ENCODE measurements at regions of chr18 and their contacts with region 1.

Region 1: DNA sequence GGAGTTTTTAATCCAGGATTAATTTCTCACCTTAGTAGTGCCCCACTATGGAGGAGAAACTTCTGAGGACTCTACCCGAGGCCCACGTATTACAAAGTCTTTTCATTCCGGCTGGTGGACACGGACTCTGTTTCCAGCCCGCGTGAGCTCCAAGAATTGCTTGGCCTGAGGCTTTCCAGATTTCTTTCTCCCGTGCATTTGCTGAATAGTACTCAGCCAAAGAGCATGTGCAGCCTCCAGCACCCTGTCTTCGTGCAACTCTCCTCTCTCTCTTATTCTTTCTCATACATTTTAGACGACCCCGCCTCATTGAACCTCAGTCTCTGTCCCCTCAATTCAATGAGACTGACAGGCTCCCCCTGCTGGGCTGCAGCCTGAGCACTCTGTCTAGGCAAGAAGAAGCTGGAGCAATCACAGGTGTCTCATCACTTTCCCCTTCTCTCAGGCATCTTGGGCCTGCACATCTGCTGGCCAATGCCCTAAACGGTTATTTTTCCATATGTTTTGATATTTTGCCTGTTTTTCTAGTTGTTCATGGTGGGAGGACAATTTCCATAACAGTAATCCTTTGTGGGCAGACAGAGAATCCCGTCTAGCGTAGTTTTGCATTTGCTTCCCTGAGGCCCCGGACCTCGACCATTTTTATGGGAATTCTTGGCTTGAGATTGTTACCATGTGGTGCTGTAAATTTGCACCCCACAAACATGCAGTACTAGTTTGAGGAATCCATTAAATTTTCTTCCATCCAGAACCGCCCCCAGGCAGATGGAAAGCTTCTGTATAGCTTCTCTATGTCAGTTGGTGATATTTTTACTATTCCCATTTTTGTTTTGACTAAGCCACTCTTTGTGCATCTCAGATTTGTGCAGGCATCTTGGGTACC is 50.1 kb upstream of the LPIN2 start:
- DNase-seq: peak; percentile 84
- H3K4me3 Mint-ChIP-seq: peak overlapping the region; percentile 73
- H3K27ac Mint-ChIP-seq: peak overlapping the region; percentile 94
- H3K4me1 Mint-ChIP-seq: peaks cover 70% of the 10 kb centered on the region
- H3K27me3 Mint-ChIP-seq: no peaks in the 10 kb centered on the region

Region 2: DNA sequence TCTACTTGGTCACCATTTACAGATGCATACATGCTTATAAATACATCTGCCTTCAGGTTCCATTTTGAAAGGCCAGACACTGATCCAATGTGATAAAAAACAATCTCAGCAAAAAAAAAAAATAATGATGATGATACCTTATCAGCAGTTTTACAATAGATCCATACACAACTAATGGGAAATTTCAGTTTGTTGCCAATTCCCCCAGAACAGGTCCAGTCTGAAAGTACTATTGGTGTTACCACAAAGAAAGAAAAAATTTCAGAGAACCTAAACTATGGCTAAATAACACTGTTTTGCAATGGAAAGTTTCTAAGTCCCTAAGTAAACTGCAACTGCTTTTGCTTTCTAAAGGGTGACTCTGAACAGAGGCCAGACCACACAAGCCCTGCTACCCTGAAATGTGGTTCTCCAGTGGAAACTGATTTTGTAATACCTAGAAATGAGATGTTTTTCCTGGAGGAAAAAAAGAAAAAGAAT is 104.2 kb before region 1 on chr18:
- CTCF ChIA-PET with region 1: interaction called, 16 read pairs
- POLR2A ChIA-PET with region 1: interaction called, 3 read pairs
- DNase-seq: peak; percentile 65
- H3K4me3 Mint-ChIP-seq: peak overlapping the region; percentile 69
- H3K27ac Mint-ChIP-seq: peak overlapping the region; percentile 97
- H3K4me1 Mint-ChIP-seq: peaks cover 91% of the 10 kb centered on the region
- H3K27me3 Mint-ChIP-seq: no peaks in the 10 kb centered on the region

Region 3: DNA sequence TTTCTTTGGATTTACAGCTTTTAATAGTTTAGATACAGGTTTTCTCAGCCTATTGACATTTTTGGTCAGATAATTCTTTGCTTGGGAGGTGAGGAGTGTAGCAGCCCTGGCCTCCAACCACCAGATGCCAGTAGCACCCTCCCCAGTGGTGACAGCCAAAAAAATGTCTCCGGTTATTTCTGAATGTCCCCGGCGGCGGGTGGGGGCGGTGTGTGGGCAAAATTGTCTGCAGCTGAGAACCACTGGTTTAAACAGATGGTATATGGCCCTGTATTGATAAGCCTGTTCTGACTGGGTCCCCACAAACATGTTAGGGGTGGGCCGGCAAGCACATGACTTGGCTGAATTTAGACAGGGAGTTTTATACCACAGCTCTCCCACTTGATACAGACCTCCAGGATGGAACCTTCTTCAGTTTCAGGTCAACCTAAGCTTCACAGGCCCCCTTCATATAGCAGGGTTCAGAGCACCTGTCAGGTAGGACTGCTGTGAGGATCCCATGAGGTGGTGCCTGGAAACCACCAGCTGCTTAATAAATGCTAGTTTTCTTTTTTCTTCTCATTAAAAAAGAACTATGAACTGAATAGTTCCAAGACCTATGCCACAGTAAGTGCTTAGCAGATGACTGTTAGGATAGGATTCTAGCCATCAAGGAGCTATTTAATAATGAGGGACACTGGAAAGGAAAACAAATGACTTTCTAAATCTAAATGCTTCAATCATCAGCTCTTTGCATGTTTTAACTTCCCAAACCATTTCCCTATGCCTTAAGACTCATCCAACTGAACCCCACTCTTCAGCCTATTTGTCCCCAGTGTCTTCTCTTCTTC is 68.2 kb before region 1 on chr18:
- CTCF ChIA-PET with region 1: interaction called, 26 read pairs
- POLR2A ChIA-PET with region 1: interaction called, 5 read pairs
- DNase-seq: peak; percentile 78
- H3K4me3 Mint-ChIP-seq: peak overlapping the region; percentile 33
- H3K27ac Mint-ChIP-seq: peak overlapping the region; percentile 75
- H3K4me1 Mint-ChIP-seq: peaks cover 79% of the 10 kb centered on the region
- H3K27me3 Mint-ChIP-seq: no peaks in the 10 kb centered on the region

Region 4: DNA sequence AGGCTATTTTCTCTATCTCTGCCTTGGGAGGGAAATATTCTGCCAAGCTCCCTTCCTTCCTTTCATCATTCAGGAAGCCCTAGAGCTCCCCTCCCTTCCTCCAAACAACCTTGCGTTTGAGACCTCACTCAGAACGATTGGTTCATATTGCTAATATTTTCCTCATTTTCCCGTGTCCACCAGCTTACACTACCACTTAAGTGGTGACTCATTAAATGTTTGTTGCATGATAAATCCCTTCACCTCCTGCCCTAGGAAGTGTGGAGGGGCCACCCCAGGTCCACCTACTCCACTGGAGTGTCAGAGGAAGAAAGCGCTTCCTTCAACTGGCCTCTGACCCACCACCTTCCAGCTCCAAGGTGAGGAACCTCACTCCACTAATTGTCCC is 47.8 kb before region 1 on chr18:
- CTCF ChIA-PET with region 1: interaction called, 12 read pairs
- POLR2A ChIA-PET with region 1: interaction called, 3 read pairs
- DNase-seq: no peak
- H3K4me3 Mint-ChIP-seq: no peak overlapping the region
- H3K27ac Mint-ChIP-seq: no peak overlapping the region
- H3K4me1 Mint-ChIP-seq: peaks cover 57% of the 10 kb centered on the region
- H3K27me3 Mint-ChIP-seq: no peaks in the 10 kb centered on the region

Region 5: DNA sequence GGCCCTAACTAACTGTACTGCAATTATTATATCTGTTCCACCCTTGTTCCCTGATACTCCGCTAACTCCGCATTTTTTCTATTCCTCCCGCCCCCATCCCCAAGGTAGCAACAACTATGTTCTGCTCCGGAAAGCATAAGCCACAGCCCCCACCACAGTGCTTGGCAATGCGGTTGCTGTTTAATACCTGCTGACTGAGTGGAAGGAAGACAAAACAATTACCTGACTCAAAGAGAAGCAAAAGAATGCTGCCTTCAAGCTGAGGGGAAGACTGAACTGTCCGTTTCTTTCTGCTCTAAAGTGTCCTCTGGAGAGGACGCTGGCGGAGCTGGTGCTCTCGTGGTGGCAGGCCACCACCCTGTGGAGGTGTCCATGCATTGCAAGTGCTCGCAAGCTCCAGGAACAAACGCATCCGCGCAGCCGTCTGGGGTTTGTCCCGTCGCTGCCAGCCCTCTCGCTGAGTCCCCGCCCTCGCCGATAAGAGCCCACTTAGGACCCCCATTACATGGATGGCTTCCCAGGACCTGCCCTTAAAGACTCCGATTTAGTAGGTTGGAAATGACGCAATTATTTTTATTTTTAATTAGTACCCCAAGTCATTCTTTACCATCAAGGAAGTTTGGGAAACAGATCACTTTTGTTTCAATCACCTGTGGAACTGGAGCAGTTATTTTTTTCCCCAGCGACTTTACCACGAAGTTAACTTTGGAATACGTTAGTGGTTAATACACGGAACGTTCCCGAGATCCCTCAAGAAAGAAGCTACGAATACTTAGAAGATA is 183.0 kb after region 1 on chr18:
- CTCF ChIA-PET with region 1: interaction called, 11 read pairs
- POLR2A ChIA-PET with region 1: interaction called, 3 read pairs
- DNase-seq: peak; percentile 86
- H3K4me3 Mint-ChIP-seq: peak overlapping the region; percentile 88
- H3K27ac Mint-ChIP-seq: peak overlapping the region; percentile 99
- H3K4me1 Mint-ChIP-seq: peaks cover 23% of the 10 kb centered on the region
- H3K27me3 Mint-ChIP-seq: no peaks in the 10 kb centered on the region

Measured in activated CD4-positive, alpha-beta T cell treated with anti-CD3 and anti-CD28 coated beads, Interleukin-2, amount 10 ng/mL, durations not matched to agents 7 days and 5 days (primary cell).